ENCODE measurements at regions of chr19 and their contacts with region 1.

Region 1: DNA sequence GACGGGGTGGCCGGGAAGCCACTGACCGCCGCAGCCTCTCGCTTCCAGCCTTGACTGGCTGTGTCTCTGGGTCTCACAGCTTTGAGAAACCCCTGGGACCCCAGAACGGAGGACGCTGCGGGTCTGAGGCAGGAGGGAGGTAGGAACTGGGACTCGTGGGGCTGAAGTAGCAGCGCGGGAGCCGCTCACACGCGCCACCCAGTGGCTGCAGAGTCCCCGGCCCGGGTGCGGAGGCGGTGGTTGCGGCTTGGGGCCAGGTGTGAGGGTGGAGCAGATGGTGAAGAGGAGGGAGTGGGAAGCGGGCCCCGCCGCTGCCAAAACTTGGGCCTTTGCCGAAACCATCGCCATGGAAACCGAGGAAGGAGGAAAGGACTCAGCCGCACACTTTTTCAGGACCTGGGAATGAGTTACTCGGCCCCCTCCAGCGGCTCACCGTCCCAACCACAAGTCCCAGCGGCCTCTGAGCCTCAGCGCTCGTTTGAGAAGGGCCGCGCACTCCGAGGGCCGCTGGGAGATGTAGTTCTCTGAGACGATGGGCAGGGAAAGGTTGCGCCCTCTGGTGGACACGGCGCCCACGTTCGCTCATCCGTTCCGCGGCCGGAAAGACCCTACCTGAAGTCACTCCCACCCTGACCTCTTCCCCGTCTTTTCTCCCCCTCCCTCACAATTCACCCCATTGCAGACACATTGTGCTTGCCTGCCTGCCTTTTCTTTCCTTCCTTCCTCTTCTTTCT is 2.2 kb upstream of the SLC17A7 start:
- DNase-seq: peak; percentile 92
- H3K4me3 ChIP-seq: peak overlapping the region; percentile 58 to 78 (median 65)
- H3K27ac ChIP-seq: no peak overlapping the region
- H3K4me1 ChIP-seq: no peaks in the 10 kb centered on the region
- H3K27me3 ChIP-seq: peaks cover 30 to 37% of the 10 kb centered on the region in 2 experiments
- CTCF ChIP-seq: peak; percentile 73 to 93
- POLR2A ChIP-seq: no peak

Region 2: DNA sequence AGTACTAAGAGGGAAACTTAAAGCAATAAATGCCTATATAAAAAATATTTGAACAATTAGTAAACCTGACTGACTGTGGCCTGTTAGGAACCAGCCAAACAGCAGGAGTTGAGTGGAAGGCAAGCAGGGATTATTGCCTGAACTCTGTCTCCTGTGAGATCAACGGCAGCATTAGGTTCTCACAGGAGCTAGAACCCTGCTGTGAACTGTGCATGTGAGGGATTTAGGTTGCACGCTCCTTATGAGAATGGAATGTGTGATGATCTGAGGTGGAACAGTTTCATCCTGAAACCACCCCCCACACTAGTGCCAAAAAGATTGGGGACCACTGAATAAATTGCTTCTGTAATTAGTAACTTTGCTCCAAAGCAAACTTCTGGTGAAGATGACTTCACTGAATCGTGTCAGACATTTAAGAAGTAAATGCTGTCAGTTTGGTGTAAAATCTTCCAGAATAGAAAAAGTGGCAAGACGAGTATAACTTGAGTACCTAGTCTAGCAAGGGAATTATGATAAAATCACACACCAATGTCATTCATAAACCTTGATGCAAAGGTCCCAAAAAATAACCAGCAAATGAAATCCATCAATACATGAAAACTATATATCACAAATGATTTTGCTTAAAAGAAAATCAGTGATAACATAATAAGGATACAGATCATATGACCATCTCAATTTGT is 172.3 kb before region 1 on chr19:
- CTCF ChIA-PET with region 1: interaction called, 4 read pairs
- POLR2A ChIA-PET with region 1: no interaction called
- dilution Hi-C with region 1: no loop called
- intact Hi-C with region 1: loop called (anchors 1 kb)
- DNase-seq: no peak
- H3K4me3 ChIP-seq: no peak overlapping the region
- H3K27ac ChIP-seq: no peak overlapping the region
- H3K4me1 ChIP-seq: no peaks in the 10 kb centered on the region
- H3K27me3 ChIP-seq: peaks cover 0 to 6% of the 10 kb centered on the region in 2 experiments
- CTCF ChIP-seq: no peak
- POLR2A ChIP-seq: no peak

Region 3: GRCh38 chr19:49363268-49364082 is 80.1 kb before region 1 on chr19 and contains the start of gene DKKL1:
- CTCF ChIA-PET with region 1: interaction called, 3 read pairs
- POLR2A ChIA-PET with region 1: interaction called, 5 read pairs
- dilution Hi-C with region 1: no loop called
- intact Hi-C with region 1: loop called (anchors 1 kb)
- DNase-seq: peak; percentile 100
- H3K4me3 ChIP-seq: peak within 1 kb of the TSS; percentile 83 to 97 (median 95)
- H3K27ac ChIP-seq: peak within 1 kb of the TSS; percentile 91
- H3K4me1 ChIP-seq: peaks cover 13% of the 10 kb centered on the region
- H3K27me3 ChIP-seq: no peaks in the 10 kb centered on the region
- CTCF ChIP-seq: no peak
- POLR2A ChIP-seq: no peak
- total RNA-seq, gene DKKL1: not detected in 2 replicates

Region 4: DNA sequence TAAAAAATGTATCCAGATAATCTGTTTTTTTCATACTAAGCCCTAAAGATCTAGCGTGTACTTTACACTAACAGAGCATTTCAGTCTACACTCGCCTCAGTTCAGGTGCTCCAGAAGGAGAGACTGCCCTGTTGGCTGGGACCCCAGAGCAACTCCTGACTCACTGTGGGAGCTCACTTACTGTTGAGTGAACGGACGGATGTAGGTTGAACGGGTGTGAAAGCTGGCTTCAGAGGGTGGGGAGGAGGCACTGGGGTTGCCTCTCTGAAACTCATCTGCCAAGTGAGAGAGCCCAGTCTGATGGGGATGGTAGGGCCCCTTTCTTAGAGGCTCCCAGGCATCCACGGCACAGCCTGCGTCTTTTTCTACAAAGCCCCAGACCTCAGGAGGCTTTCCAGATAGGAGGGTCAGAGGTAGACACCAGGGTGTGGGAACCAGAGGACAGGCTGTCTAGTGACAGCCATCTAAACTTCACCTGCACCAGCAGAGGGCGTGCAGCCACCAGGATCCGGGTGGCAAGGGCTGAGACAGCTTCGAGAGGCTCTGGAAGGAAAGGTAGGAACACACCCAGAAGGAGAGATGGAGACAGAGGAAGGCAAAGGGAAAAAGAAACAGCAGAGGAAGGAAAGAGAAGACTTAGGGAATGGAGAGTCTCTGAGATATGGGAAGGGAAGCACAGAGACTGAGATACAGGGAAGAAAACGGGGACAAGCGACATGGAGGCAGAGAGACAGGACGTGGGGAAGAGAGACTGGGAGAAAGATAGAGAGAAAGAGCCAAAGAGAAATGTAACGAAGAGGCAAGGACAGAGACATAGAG is 51.7 kb before region 1 on chr19:
- CTCF ChIA-PET with region 1: interaction called, 11 read pairs
- POLR2A ChIA-PET with region 1: no interaction called
- dilution Hi-C with region 1: no loop called
- intact Hi-C with region 1: loop called (anchors 1 kb)
- DNase-seq: peak; percentile 55
- H3K4me3 ChIP-seq: no peak overlapping the region
- H3K27ac ChIP-seq: no peak overlapping the region
- H3K4me1 ChIP-seq: no peaks in the 10 kb centered on the region
- H3K27me3 ChIP-seq: peaks cover 0 to 2% of the 10 kb centered on the region in 2 experiments
- CTCF ChIP-seq: peak; percentile 68 to 81
- POLR2A ChIP-seq: no peak

Region 5: DNA sequence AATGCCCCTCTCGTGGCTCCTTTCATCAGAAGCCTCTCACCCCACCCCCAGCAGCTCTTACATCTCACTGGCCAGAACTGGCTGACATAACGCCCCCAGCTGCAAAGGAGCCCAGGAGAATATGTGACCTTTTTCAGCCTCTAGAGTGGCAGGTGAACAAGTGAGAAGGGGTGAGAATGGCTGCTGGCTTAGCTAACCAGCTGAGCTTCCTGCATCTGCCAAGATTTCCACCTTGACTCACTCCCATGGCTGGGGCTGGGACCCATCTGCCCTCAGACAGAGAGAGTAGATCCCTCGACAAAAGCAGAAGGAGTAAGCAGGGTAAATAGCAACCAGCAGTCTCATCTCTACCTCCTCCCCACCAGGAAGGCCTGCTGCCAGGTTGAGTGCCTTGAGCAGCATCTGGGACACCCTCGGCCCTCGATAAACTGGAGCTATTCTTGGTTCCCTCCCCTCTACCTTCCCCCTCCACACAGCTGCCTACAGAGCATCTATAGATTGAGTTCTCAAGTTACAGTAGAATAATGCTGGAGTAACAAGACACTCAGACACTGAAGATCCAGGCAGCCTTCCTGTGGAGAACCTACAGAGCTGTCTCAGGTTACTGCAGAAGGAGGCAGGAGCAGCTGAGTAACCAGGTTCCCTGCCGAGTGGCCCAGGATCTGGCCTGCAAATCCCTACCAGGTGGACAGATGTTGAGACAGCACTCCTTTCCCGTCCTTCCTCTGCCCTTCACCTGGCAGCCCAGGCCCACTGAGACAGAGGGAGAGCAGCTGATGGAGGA is 39.9 kb before region 1 on chr19:
- CTCF ChIA-PET with region 1: no interaction called
- POLR2A ChIA-PET with region 1: no interaction called
- dilution Hi-C with region 1: no loop called
- intact Hi-C with region 1: no loop called
- DNase-seq: no peak
- H3K4me3 ChIP-seq: no peak overlapping the region
- H3K27ac ChIP-seq: no peak overlapping the region
- H3K4me1 ChIP-seq: no peaks in the 10 kb centered on the region
- H3K27me3 ChIP-seq: no peaks in the 10 kb centered on the region
- CTCF ChIP-seq: no peak
- POLR2A ChIP-seq: no peak

Region 6: DNA sequence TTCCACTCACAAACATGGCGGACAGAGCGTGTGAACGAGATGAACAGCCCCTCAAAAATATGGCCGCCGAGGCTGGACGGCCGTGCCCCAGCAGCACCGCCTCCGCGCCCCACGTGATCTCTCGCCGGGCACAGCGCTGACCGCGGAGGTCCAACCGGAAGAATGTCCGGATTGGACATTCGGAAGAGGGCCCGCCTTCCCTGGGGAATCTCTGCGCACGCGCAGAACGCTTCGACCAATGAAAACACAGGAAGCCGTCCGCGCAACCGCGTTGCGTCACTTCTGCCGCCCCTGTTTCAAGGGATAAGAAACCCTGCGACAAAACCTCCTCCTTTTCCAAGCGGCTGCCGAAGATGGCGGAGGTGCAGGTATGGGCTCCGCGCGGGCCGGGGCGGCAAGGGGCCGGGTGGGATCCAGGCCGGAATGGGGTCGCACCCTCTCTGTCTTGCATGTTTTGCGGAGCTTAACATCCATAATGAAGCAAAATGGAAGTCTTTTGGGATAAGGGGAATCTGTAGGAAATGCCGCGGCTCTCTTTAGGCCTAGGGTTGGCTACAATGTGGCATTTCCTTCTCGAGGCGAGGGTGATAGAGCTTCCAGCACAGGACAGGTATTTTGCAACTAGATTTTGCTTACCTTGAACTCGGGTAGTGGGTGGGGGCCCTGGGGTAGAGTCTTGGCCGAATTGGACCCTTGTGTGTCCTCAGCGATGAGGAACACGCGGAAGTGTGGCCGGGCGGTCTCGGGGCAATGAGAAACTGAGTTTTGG is 43.9 kb after region 1 on chr19 and contains the start of gene RPL13A:
- CTCF ChIA-PET with region 1: no interaction called
- POLR2A ChIA-PET with region 1: no interaction called
- dilution Hi-C with region 1: no loop called
- intact Hi-C with region 1: no loop called
- DNase-seq: peak; percentile 100
- H3K4me3 ChIP-seq: peak within 1 kb of the TSS; percentile 60 to 94 (median 90)
- H3K27ac ChIP-seq: peak within 1 kb of the TSS; percentile 89
- H3K4me1 ChIP-seq: peaks cover 12% of the 10 kb centered on the region
- H3K27me3 ChIP-seq: no peaks in the 10 kb centered on the region
- CTCF ChIP-seq: no peak
- POLR2A ChIP-seq: peak; percentile 99
- total RNA-seq, gene RPL13A: 2,291 and 2,318 TPM in 2 replicates

Region 7: DNA sequence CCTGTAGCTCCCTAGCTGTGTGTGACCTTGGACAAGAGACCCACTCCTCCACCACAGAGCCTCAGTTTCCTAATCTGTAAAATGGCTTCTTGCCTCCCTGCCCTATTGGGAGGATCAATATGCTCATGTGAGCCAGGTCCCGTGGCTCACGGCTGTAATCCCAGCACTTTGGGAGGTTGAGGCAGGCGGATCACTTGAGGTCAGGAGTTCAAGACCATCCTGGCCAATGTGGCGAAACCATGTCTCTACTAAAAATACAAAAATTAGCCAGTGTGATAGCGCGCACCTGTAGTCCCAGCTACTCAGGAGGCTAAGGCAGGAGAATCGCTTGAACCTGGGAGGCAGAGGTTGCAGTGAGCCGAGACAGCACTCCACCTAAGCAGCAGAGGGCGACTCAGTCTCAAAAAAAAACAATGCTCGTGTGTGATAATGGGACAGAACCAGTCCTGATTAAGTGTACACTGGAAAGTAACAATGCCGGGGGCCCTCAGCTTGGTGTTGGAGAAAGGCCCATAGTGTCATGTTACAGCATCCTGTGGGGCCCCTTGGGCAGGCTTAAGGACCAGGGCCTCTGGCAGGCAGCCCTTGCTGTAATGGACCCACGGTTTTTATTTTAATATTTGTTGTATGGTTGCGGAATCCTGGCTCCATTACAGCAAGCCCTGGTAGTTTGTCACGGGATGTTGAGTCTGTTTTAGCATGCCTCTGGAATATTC is 59.5 kb after region 1 on chr19:
- CTCF ChIA-PET with region 1: no interaction called
- POLR2A ChIA-PET with region 1: no interaction called
- dilution Hi-C with region 1: no loop called
- intact Hi-C with region 1: no loop called
- DNase-seq: peak; percentile 83
- H3K4me3 ChIP-seq: no peak overlapping the region
- H3K27ac ChIP-seq: no peak overlapping the region
- H3K4me1 ChIP-seq: peaks cover 28% of the 10 kb centered on the region
- H3K27me3 ChIP-seq: no peaks in the 10 kb centered on the region
- CTCF ChIP-seq: peak; percentile 41 to 70
- POLR2A ChIP-seq: no peak